ENCODE measurements at regions of chr5 and their contacts with region 1.

Region 1: DNA sequence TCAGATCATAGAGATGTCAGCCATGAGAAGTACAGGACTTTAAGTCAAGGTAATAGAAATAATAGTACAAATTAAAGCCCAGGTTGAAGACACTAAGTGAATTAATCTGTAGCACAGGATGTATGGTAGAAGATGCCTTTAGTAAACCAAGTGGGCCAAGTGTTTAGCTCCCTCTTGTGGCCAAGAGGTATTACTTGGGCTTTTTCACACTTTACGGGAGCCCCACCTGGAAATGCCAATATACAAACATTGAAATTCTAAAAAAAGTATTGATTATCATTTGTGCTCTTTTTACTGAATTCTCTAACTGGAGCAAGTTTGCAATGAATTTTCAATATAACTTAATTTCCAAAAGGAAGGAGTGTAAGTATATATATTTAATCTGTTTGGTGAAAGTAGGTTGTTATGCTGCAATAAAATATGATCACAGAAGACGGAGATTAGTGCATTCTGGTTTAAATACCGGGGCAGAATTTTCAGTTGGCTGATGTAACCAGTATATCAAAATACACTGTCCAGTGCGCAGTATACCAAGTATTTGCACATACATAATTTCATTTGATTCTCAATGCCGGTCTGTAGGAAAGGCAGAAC is 84.7 kb downstream of the PARP8 start:
- DNase-seq: peak; percentile 20
- H3K4me3 Mint-ChIP-seq: no peak overlapping the region
- H3K27ac Mint-ChIP-seq: no peak overlapping the region
- H3K4me1 Mint-ChIP-seq: peaks cover 21% of the 10 kb centered on the region
- H3K27me3 Mint-ChIP-seq: no peaks in the 10 kb centered on the region
- CTCF ChIP-seq: peak; percentile 66

Region 2: DNA sequence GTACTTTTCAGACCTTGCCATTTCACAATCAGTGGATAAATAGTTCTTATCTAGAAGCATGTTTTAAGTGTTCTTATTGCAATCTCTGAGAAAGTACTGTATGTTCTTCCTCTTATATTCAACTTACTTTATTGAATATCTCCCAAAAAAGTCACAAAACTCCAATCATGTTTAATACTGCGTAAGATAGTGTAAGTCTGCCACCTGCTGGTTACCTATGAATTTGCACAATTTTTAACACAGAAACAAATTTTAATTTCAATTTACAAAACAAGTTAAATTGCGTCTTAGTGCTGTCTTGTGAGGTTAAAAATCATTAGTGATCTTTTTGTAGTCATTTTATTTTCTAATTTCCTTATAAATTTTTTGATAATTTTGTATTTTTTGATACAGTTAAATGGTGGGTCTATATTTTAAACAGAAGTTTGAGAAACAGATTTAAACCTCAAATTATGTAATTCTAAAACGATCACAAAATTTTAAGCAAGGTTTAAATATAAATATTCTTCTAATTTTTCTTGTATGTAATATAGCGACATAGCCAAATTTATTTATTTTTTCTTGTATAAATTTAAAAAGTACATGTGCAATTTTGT is 425.8 kb before region 1 on chr5:
- CTCF ChIA-PET with region 1: no interaction called
- intact Hi-C with region 1: loop called (anchors 5 kb)
- DNase-seq: peak; percentile 13
- H3K4me3 Mint-ChIP-seq: no peak overlapping the region
- H3K27ac Mint-ChIP-seq: no peak overlapping the region
- H3K4me1 Mint-ChIP-seq: no peaks in the 10 kb centered on the region
- H3K27me3 Mint-ChIP-seq: no peaks in the 10 kb centered on the region
- CTCF ChIP-seq: peak; percentile 50

Region 3: GRCh38 chr5:50440651-50441492 is 310.3 kb before region 1 on chr5 and contains the start of gene EMB:
- CTCF ChIA-PET with region 1: no interaction called
- intact Hi-C with region 1: loop called (anchors 5 kb)
- DNase-seq: peak; percentile 80
- H3K4me3 Mint-ChIP-seq: peak within 1 kb of the TSS; percentile 93
- H3K27ac Mint-ChIP-seq: peak within 1 kb of the TSS; percentile 84
- H3K4me1 Mint-ChIP-seq: no peaks in the 10 kb centered on the region
- H3K27me3 Mint-ChIP-seq: no peaks in the 10 kb centered on the region
- CTCF ChIP-seq: peak; percentile 32
- total RNA-seq, gene EMB: 37.9 and 44.4 TPM in 2 replicates

Region 4: DNA sequence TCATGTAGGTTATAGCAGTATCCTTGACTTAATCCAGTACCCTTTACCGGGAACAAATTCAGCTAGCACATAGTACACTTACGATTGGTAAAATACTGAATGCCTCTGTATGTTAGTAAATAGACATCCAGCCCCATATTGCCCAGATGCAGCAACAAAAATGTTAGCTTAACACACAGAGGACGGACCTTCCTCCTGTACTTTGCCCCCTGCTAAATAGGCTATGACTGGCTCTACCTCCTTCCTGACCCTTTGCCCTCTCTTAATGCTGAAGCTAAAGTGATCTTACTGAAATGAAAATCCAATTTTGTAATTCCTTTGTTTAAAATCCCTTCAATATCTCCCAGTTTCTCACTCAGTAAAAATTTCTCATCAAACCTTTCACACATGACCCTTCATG is 98.4 kb after region 1 on chr5:
- CTCF ChIA-PET with region 1: no interaction called
- intact Hi-C with region 1: no loop called
- DNase-seq: no peak
- H3K4me3 Mint-ChIP-seq: no peak overlapping the region
- H3K27ac Mint-ChIP-seq: no peak overlapping the region
- H3K4me1 Mint-ChIP-seq: no peaks in the 10 kb centered on the region
- H3K27me3 Mint-ChIP-seq: no peaks in the 10 kb centered on the region
- CTCF ChIP-seq: no peak

Region 5: GRCh38 chr5:51082741-51083140 is 331.6 kb after region 1 on chr5:
- CTCF ChIA-PET with region 1: no interaction called
- intact Hi-C with region 1: no loop called
- DNase-seq: no peak
- H3K4me3 Mint-ChIP-seq: no peak overlapping the region
- H3K27ac Mint-ChIP-seq: no peak overlapping the region
- H3K4me1 Mint-ChIP-seq: no peaks in the 10 kb centered on the region
- H3K27me3 Mint-ChIP-seq: no peaks in the 10 kb centered on the region
- CTCF ChIP-seq: no peak